AG04449 (cell line): ENCODE measurements at regions of chr20 and their contacts with region 1.

Region 1: DNA sequence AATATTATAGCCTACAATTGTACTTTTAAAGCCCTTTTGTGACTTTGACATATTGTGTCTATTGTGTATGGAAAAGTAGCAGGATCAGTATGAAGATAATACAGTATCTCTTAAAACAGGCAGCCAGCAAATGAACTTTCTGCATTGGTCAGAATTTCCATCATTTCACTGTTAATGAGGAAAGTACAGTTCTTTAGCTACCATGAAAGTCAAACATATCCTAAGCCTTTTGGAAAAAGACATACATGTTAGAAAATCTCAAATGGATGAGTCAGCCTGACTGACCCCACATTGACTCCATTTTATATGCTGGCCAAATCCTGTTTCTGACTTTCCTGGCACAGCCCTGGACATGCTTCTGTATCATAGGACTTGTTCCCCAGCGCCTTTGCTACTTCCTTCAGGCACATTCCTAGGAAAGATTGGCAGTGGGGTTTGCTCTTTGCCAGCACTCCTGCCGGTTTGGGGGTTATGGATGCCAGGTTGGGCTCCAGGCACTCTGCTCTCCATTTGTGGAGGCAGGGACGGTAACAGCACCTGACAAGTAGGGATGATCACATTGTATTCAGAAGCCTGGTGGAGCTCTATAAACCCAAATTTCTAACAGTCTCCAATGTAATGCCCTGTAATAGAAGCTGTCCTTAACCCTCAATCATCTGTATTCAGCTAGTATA is 43.7 kb downstream of the TOP1 start:
- DNase-seq: peak; percentile 50
- H3K4me3 ChIP-seq: no peak overlapping the region
- CTCF ChIP-seq: no peak

Region 2: GRCh38 chr20:40233406-40233805 is 838.9 kb before region 1 on chr20:
- CTCF ChIA-PET with region 1: no interaction called
- POLR2A ChIA-PET with region 1: no interaction called
- DNase-seq: no peak
- H3K4me3 ChIP-seq: no peak overlapping the region
- CTCF ChIP-seq: no peak

Region 3: DNA sequence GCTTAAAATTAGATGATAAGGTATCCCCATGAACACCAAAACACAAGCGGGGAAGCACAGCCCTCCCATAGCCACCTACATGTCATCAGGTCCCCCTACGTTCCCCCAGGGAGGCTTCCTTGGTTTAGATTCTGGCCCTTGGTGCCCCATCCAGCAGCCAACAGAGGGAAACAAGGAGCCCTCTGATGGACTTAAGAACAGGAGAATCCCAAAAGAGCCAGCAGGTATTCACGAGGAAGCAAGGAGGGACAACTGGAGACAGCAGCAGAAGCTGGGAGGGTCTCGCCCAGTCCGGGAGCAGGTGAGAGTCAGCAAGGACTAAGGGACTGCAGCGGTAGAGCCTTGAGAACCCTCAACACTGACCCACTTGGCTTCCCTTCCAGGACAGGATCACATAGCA is 102.1 kb before region 1 on chr20:
- CTCF ChIA-PET with region 1: interaction called, 26 read pairs
- POLR2A ChIA-PET with region 1: no interaction called
- DNase-seq: no peak
- H3K4me3 ChIP-seq: no peak overlapping the region
- CTCF ChIP-seq: no peak

Region 4: GRCh38 chr20:41086402-41087338 is 14.3 kb after region 1 on chr20:
- CTCF ChIA-PET with region 1: interaction called, 27 read pairs
- POLR2A ChIA-PET with region 1: no interaction called
- DNase-seq: no peak
- H3K4me3 ChIP-seq: no peak overlapping the region
- CTCF ChIP-seq: no peak

Region 5: GRCh38 chr20:41380551-41381193 is 308.3 kb after region 1 on chr20:
- CTCF ChIA-PET with region 1: no interaction called
- POLR2A ChIA-PET with region 1: no interaction called
- DNase-seq: no peak
- H3K4me3 ChIP-seq: no peak overlapping the region
- CTCF ChIP-seq: no peak